ENCODE measurements at regions of chr1 and their contacts with region 1.

Region 1: GRCh38 chr1:228515200-228515834 is 28.1 kb downstream of the RNF187 start:
- DNase-seq: peak in 7 of 9 donors; percentile 14 to 57 (median 43)
- ATAC-seq: peak; percentile 67
- H3K4me3 ChIP-seq: no peak overlapping the region
- H3K4me3 Mint-ChIP-seq: no peak overlapping the region
- H3K27ac ChIP-seq: no peak overlapping the region
- H3K27ac Mint-ChIP-seq: no peak overlapping the region
- H3K4me1 ChIP-seq: peaks cover 0 to 6% of the 10 kb centered on the region in 2 donors
- H3K4me1 Mint-ChIP-seq: peaks cover 0 to 8% (median 6%) of the 10 kb centered on the region in 7 donors
- H3K27me3 ChIP-seq: no peaks in the 10 kb centered on the region
- H3K27me3 Mint-ChIP-seq: peaks cover 19 to 56% (median 42%) of the 10 kb centered on the region in 5 donors

Region 2: DNA sequence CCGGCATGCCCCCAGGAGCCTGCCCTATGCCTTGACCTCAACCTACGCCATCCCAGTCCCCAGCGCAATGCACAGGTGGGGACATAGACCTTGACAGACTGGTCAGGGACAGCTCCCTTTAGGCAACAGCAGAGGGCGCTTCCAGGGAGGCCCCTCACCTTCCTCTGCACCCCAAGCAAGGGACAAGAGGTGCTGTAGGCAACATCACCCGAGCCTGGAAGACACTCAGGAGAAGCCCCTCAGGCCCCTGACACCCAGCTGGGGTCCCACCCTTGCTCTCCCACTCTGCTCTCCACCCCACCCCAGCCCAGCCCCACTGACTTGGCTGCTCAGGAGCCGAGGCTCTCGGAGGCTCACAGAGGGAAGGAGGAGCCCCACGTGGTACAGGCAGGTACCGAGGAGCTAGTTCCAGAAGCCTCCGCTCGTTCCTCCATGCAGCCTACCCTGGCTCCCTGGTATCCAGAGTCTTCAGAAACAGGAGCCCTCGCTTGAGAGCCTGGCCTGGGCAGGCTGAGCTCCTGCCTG is 510.9 kb before region 1 on chr1:
- CTCF ChIA-PET with region 1: interaction called, 3 read pairs
- POLR2A ChIA-PET with region 1: no interaction called
- intact Hi-C with region 1: loop called (anchors 1 kb)
- DNase-seq: peak in 2 of 9 donors; percentile 12 to 20
- ATAC-seq: peak; percentile 37
- H3K4me3 ChIP-seq: no peak overlapping the region
- H3K4me3 Mint-ChIP-seq: peak overlapping the region in 3 of 10 donors; percentile 17 to 54 (median 51)
- H3K27ac ChIP-seq: no peak overlapping the region
- H3K27ac Mint-ChIP-seq: no peak overlapping the region
- H3K4me1 ChIP-seq: no peaks in the 10 kb centered on the region
- H3K4me1 Mint-ChIP-seq: peaks cover 0 to 12% (median 5%) of the 10 kb centered on the region in 7 donors
- H3K27me3 ChIP-seq: peaks cover 6 to 17% of the 10 kb centered on the region in 2 donors
- H3K27me3 Mint-ChIP-seq: peaks cover 22 to 60% (median 49%) of the 10 kb centered on the region in 5 donors

Region 3: DNA sequence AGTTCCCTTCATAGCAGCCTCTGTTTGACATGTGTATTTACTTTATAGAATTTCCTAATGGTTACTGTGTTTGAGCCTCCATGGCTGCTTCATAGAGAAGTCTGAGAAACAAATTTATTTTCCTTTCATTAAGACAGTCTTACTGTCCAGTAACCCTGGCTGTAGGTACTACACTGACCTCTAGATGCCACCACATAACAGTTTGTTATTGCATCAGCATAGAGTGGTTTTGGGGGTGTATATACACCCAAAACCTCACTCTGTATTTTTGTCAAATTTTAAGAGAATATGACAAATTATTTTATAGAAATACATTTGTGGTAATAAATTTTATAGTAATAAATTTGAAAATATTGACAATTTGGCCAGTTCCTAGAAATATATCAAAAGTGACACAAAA is 250.2 kb before region 1 on chr1:
- CTCF ChIA-PET with region 1: interaction called, 3 read pairs
- POLR2A ChIA-PET with region 1: no interaction called
- intact Hi-C with region 1: loop called in 1 of 2 experiments (anchors 2 kb)
- DNase-seq: peak in 1 of 9 donors; percentile 2
- ATAC-seq: no peak
- H3K4me3 ChIP-seq: no peak overlapping the region
- H3K4me3 Mint-ChIP-seq: no peak overlapping the region
- H3K27ac ChIP-seq: no peak overlapping the region
- H3K27ac Mint-ChIP-seq: no peak overlapping the region
- H3K4me1 ChIP-seq: no peaks in the 10 kb centered on the region
- H3K4me1 Mint-ChIP-seq: peaks cover 0 to 5% (median 0%) of the 10 kb centered on the region in 7 donors
- H3K27me3 ChIP-seq: no peaks in the 10 kb centered on the region
- H3K27me3 Mint-ChIP-seq: no peaks in the 10 kb centered on the region

Region 4: DNA sequence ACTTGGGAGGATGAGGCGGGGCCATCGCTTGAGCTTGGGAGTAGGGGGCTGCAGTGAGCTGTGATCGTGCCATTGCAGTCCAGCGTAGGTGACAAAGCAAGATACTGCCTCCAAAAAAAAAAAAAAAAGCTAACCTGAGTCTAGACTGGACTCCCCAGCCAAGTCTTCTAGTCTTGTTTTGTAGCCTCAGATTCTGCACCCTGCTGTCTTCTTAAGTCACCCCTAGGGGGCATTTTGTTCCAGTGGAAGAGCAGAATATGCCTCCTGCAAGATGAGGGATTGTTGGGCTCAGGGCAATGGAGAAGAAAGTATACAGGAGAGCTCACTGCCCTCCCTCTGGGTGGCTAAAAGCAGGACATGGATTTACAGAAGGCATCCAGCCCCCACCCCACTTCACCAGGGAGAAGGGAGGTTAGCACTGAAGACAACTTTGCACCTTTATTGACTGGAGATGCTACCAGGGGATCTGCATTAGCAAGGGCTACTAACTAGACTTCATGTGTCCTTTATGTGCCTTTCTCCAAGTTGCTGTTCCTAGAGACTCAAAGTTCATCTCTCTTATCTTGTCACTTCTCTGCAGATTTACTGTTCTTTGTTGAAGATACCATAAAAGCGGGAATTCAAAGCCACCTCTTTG is 43.4 kb before region 1 on chr1:
- CTCF ChIA-PET with region 1: no interaction called
- POLR2A ChIA-PET with region 1: no interaction called
- intact Hi-C with region 1: loop called in 1 of 2 experiments (anchors 2 kb)
- DNase-seq: peak in 3 of 9 donors; percentile 10 to 28 (median 18)
- ATAC-seq: peak; percentile 71
- H3K4me3 ChIP-seq: no peak overlapping the region
- H3K4me3 Mint-ChIP-seq: no peak overlapping the region
- H3K27ac ChIP-seq: no peak overlapping the region
- H3K27ac Mint-ChIP-seq: peak overlapping the region in 2 of 9 donors; percentile 1 to 37
- H3K4me1 ChIP-seq: no peaks in the 10 kb centered on the region
- H3K4me1 Mint-ChIP-seq: peaks cover 0 to 28% (median under 1%) of the 10 kb centered on the region in 7 donors
- H3K27me3 ChIP-seq: no peaks in the 10 kb centered on the region
- H3K27me3 Mint-ChIP-seq: peaks cover 24 to 42% (median 27%) of the 10 kb centered on the region in 5 donors